CD8-positive, alpha-beta T cell (primary cell): ENCODE measurements at regions of chr7 and their contacts with region 1.

Region 1: DNA sequence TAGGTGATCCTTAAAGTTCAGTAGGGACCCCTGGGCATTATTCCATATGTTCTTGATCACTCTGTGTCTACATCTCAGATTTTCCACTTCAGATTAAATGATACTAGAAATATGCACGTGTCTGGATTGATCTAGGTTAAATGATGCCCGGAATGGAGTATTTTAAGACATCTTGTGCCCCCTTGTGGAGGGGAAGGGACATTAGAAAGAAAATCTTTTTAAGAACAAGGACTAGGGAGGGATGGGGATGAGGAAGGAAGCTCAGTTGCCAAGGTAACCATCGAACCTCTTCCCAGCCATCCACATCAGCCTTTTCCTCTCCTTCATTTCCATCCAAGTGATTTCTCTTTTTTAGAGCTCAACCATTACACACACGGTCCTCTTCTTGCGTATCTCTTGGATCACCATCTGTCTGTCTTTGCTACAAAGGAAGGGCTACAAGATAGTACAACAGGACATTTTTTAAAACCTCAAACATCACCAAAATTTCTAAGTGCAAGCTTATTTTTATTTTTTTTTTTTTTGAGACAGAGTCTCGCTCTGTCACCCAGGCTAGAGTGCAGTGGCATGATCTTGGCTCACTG is 40.5 kb downstream of the PRSS2 start:
- DNase-seq: peak in 4 of 9 experiments; percentile 41 to 87 (median 72)
- ATAC-seq: no peak
- H3K4me3 ChIP-seq: no peak overlapping the region
- H3K4me3 Mint-ChIP-seq: peak overlapping the region; percentile 26
- H3K27ac ChIP-seq: peak overlapping the region; percentile 86 to 99
- H3K27ac Mint-ChIP-seq: peak overlapping the region; percentile 100
- H3K4me1 ChIP-seq: peaks cover 71% of the 10 kb centered on the region
- H3K4me1 Mint-ChIP-seq: peaks cover 83% of the 10 kb centered on the region
- H3K27me3 ChIP-seq: no peaks in the 10 kb centered on the region
- H3K27me3 Mint-ChIP-seq: no peaks in the 10 kb centered on the region
- CTCF ChIP-seq: peak; percentile 80

Region 2: DNA sequence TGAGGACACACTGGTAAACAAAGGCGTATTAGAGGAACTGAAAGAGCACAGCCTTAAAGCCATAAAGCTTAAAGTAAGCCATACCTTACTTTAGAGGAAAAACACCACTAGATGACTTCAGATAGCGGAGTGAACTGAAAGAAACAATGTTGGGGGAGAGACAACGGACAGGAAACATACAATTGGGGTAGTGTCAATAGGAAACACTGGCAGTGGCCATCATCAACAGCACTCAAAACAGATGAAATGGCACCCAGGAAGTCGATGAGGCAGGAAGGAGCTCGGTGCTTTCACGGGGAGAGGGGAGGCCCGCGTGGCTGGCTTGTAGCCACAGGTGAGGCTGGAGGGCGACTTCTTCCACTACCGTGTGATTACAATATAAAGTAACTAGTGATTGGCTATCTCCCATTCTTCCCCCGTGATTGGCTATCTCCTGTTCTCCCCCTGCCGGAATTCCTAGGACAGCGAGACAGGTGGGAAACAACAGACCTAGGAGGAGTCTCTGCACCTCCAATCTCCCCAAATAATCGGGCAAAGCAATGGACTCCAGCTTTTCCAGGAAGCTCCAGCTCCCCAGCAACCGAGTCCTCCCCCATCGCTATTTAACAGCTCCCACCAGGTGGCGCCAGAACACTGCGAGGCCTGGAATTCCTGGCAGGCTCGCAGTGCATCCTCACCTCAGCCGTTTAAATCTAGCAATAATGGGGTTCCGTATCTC is 835.3 kb before region 1 on chr7:
- CTCF ChIA-PET with region 1: interaction called, 3 read pairs
- POLR2A ChIA-PET with region 1: no interaction called
- intact Hi-C with region 1: loop called in 1 of 2 experiments (anchors 5 kb)
- DNase-seq: peak; percentile 17 to 81 (median 64)
- ATAC-seq: peak; percentile 82
- H3K4me3 ChIP-seq: peak overlapping the region; percentile 46 to 50
- H3K4me3 Mint-ChIP-seq: peak overlapping the region; percentile 79
- H3K27ac ChIP-seq: peak overlapping the region in 1 of 2 experiments; percentile 18
- H3K27ac Mint-ChIP-seq: peak overlapping the region; percentile 46
- H3K4me1 ChIP-seq: peaks cover 6% of the 10 kb centered on the region
- H3K4me1 Mint-ChIP-seq: peaks cover 22% of the 10 kb centered on the region
- H3K27me3 ChIP-seq: no peaks in the 10 kb centered on the region
- H3K27me3 Mint-ChIP-seq: no peaks in the 10 kb centered on the region
- CTCF ChIP-seq: peak; percentile 76

Region 3: DNA sequence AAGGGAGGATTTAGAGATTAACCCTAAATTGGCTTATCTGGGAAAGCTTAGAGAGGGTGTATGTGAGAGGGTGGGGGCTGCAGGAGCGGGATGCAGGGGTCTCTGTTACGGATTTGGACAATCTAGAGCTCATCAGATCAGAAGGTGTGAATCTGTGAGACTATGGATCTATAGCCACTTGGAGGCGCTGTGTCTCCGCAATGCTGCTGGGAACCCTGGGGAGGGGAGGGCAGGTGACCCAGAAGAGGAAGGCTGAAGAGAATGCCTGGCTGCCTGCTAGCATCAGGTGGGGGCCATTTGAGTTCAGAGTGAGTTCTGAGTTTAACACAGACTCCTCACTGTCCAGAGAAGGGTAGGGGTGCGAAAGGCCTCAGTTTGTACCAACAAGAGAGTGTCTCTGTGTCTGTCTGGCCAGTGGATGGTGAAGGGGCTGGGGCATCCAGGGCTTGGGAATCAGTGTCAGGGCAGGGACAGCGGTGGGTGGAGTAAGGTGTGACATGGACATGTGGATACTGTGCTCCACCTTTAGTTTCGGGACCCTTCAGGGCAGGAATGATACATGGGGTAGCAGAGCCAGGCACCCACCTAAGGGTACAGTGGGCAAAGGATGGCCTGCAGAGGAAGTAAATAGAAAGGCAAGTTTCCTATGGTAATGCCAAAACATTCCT is 366.1 kb before region 1 on chr7:
- CTCF ChIA-PET with region 1: interaction called, 3 read pairs
- POLR2A ChIA-PET with region 1: interaction called, 4 read pairs
- intact Hi-C with region 1: loop called (anchors 2 to 5 kb)
- DNase-seq: peak in 7 of 9 experiments; percentile 9 to 57 (median 47)
- ATAC-seq: peak; percentile 55
- H3K4me3 ChIP-seq: no peak overlapping the region
- H3K4me3 Mint-ChIP-seq: no peak overlapping the region
- H3K27ac ChIP-seq: no peak overlapping the region
- H3K27ac Mint-ChIP-seq: peak overlapping the region; percentile 62
- H3K4me1 ChIP-seq: peaks cover 14% of the 10 kb centered on the region
- H3K4me1 Mint-ChIP-seq: peaks cover 32% of the 10 kb centered on the region
- H3K27me3 ChIP-seq: no peaks in the 10 kb centered on the region
- H3K27me3 Mint-ChIP-seq: peaks cover 2% of the 10 kb centered on the region
- CTCF ChIP-seq: no peak

Region 4: DNA sequence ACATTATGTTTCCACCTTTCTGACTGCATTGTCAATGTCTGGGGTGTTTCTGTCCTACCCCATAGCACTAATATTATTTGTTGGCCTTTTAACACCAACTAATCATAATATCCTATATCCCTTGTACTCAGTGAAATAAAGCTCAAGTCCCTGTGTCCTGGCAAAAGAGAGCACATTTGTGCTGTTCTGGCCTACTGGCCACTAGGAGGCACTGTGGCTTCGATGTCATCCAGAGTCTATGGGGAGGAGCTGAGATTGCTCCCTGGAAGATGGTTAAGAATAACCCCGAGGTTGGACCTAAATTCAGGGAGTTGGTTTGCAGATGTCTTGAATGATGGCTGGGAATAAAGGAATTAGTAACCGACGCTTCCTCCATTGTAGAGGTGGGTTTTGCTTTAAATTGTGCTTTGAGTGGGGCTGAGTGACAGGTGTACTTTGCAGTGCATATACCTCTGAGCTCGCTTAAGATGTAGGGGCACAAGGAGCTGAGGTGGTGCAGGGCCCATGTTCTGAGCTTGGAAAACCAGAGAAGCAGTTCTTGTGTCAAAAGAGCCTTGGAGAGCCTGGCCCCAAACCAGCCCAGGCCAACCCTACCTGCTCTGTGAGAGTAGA is 253.2 kb before region 1 on chr7:
- CTCF ChIA-PET with region 1: interaction called, 3 read pairs
- POLR2A ChIA-PET with region 1: no interaction called
- intact Hi-C with region 1: loop called (anchors 1 to 2 kb)
- DNase-seq: peak; percentile 10 to 74 (median 56)
- ATAC-seq: peak; percentile 84
- H3K4me3 ChIP-seq: peak overlapping the region in 1 of 2 experiments; percentile 32
- H3K4me3 Mint-ChIP-seq: peak overlapping the region; percentile 48
- H3K27ac ChIP-seq: peak overlapping the region in 1 of 2 experiments; percentile 31
- H3K27ac Mint-ChIP-seq: peak overlapping the region; percentile 45
- H3K4me1 ChIP-seq: no peaks in the 10 kb centered on the region
- H3K4me1 Mint-ChIP-seq: peaks cover 2% of the 10 kb centered on the region
- H3K27me3 ChIP-seq: no peaks in the 10 kb centered on the region
- H3K27me3 Mint-ChIP-seq: peaks cover 3% of the 10 kb centered on the region
- CTCF ChIP-seq: peak; percentile 62

Region 5: GRCh38 chr7:142711746-142712619 is 99.3 kb before region 1 on chr7:
- CTCF ChIA-PET with region 1: interaction called, 33 read pairs
- POLR2A ChIA-PET with region 1: interaction called, 50 read pairs
- intact Hi-C with region 1: loop called (anchors 1 to 5 kb)
- DNase-seq: peak in 6 of 9 experiments; percentile 26 to 74 (median 46)
- ATAC-seq: peak; percentile 76
- H3K4me3 ChIP-seq: peak overlapping the region; percentile 42 to 64
- H3K4me3 Mint-ChIP-seq: peak overlapping the region; percentile 89
- H3K27ac ChIP-seq: peak overlapping the region; percentile 56 to 70
- H3K27ac Mint-ChIP-seq: peak overlapping the region; percentile 95
- H3K4me1 ChIP-seq: peaks cover 46% of the 10 kb centered on the region
- H3K4me1 Mint-ChIP-seq: peaks cover 58% of the 10 kb centered on the region
- H3K27me3 ChIP-seq: no peaks in the 10 kb centered on the region
- H3K27me3 Mint-ChIP-seq: no peaks in the 10 kb centered on the region
- CTCF ChIP-seq: peak; percentile 38

Region 6: GRCh38 chr7:142853739-142854371 is 42.6 kb after region 1 on chr7:
- CTCF ChIA-PET with region 1: interaction called, 13 read pairs
- POLR2A ChIA-PET with region 1: interaction called, 18 read pairs
- intact Hi-C with region 1: loop called in 1 of 2 experiments (anchors 2 kb)
- DNase-seq: peak; percentile 36 to 82 (median 64)
- ATAC-seq: peak; percentile 76
- H3K4me3 ChIP-seq: peak overlapping the region; percentile 58 to 79
- H3K4me3 Mint-ChIP-seq: peak overlapping the region; percentile 98
- H3K27ac ChIP-seq: peak overlapping the region in 1 of 2 experiments; percentile 41
- H3K27ac Mint-ChIP-seq: peak overlapping the region; percentile 91
- H3K4me1 ChIP-seq: peaks cover 9% of the 10 kb centered on the region
- H3K4me1 Mint-ChIP-seq: peaks cover 14% of the 10 kb centered on the region
- H3K27me3 ChIP-seq: no peaks in the 10 kb centered on the region
- H3K27me3 Mint-ChIP-seq: no peaks in the 10 kb centered on the region
- CTCF ChIP-seq: peak; percentile 77

Region 7: GRCh38 chr7:142974626-142975025 is 163.4 kb after region 1 on chr7:
- CTCF ChIA-PET with region 1: no interaction called
- POLR2A ChIA-PET with region 1: no interaction called
- intact Hi-C with region 1: no loop called
- DNase-seq: no peak
- ATAC-seq: no peak
- H3K4me3 ChIP-seq: no peak overlapping the region
- H3K4me3 Mint-ChIP-seq: no peak overlapping the region
- H3K27ac ChIP-seq: no peak overlapping the region
- H3K27ac Mint-ChIP-seq: no peak overlapping the region
- H3K4me1 ChIP-seq: no peaks in the 10 kb centered on the region
- H3K4me1 Mint-ChIP-seq: no peaks in the 10 kb centered on the region
- H3K27me3 ChIP-seq: no peaks in the 10 kb centered on the region
- H3K27me3 Mint-ChIP-seq: peaks cover 12% of the 10 kb centered on the region
- CTCF ChIP-seq: no peak

Region 8: DNA sequence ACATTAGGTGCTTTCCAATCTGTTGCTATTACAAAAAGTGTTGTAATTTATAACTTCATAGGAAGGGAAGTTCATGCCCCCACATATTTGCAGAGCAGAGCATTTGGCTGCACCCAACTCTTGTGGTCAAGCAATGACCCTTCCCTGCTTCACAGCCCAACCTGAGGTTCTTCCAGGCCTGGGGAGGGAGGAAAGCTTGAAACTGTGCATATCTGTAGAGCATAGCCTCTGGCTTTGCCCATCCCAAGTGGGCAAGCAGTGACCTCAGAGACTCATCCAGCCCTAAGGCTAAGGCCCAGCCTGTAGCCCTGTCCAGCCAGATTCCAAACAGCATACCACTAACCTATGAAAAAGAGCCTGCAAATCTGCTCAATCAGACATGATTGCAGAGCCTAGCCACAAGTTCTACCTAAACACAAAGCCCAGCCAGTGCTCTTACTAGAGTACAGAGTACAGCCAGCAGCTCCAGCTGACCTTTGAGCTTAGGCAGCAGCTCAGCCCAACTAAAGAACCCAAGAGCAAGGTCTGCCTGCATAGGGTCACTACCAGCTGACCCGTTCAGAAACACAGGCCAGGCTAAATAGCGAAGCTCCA is 437.6 kb after region 1 on chr7:
- CTCF ChIA-PET with region 1: no interaction called
- POLR2A ChIA-PET with region 1: no interaction called
- intact Hi-C with region 1: loop called in 1 of 2 experiments (anchors 2 kb)
- DNase-seq: no peak
- ATAC-seq: no peak
- H3K4me3 ChIP-seq: no peak overlapping the region
- H3K4me3 Mint-ChIP-seq: no peak overlapping the region
- H3K27ac ChIP-seq: no peak overlapping the region
- H3K27ac Mint-ChIP-seq: peak overlapping the region; percentile 73
- H3K4me1 ChIP-seq: peaks cover 60% of the 10 kb centered on the region
- H3K4me1 Mint-ChIP-seq: peaks cover 79% of the 10 kb centered on the region
- H3K27me3 ChIP-seq: no peaks in the 10 kb centered on the region
- H3K27me3 Mint-ChIP-seq: no peaks in the 10 kb centered on the region
- CTCF ChIP-seq: no peak